CD4-positive, alpha-beta T cell (primary cell): ENCODE measurements at regions of chr2 and their contacts with region 1.

Region 1: GRCh38 chr2:62412347-62412742 is 93.7 kb downstream of the TMEM17 start:
- DNase-seq: peak in 1 of 14 experiments; percentile 31
- ATAC-seq: no peak
- H3K4me3 ChIP-seq: no peak overlapping the region
- H3K4me3 Mint-ChIP-seq: peak overlapping the region; percentile 65
- H3K27ac ChIP-seq: no peak overlapping the region
- H3K27ac Mint-ChIP-seq: peak overlapping the region; percentile 70
- H3K4me1 ChIP-seq: peaks cover 5% of the 10 kb centered on the region
- H3K4me1 Mint-ChIP-seq: peaks cover 5% of the 10 kb centered on the region
- H3K27me3 ChIP-seq: no peaks in the 10 kb centered on the region
- H3K27me3 Mint-ChIP-seq: no peaks in the 10 kb centered on the region
- CTCF ChIP-seq: no peak

Region 2: GRCh38 chr2:61922714-61923113 is 489.6 kb before region 1 on chr2:
- CTCF ChIA-PET with region 1: no interaction called
- POLR2A ChIA-PET with region 1: no interaction called
- intact Hi-C with region 1: loop called (anchors 1 kb)
- DNase-seq: no peak
- ATAC-seq: no peak
- H3K4me3 ChIP-seq: no peak overlapping the region
- H3K4me3 Mint-ChIP-seq: no peak overlapping the region
- H3K27ac ChIP-seq: no peak overlapping the region
- H3K27ac Mint-ChIP-seq: no peak overlapping the region
- H3K4me1 ChIP-seq: no peaks in the 10 kb centered on the region
- H3K4me1 Mint-ChIP-seq: no peaks in the 10 kb centered on the region
- H3K27me3 ChIP-seq: no peaks in the 10 kb centered on the region
- H3K27me3 Mint-ChIP-seq: no peaks in the 10 kb centered on the region
- CTCF ChIP-seq: no peak

Region 3: GRCh38 chr2:61993444-61994024 is 418.8 kb before region 1 on chr2:
- CTCF ChIA-PET with region 1: interaction called, 3 read pairs
- POLR2A ChIA-PET with region 1: no interaction called
- intact Hi-C with region 1: loop called (anchors 1 to 2 kb)
- DNase-seq: peak in 4 of 14 experiments; percentile 10 to 49 (median 46)
- ATAC-seq: no peak
- H3K4me3 ChIP-seq: no peak overlapping the region
- H3K4me3 Mint-ChIP-seq: no peak overlapping the region
- H3K27ac ChIP-seq: no peak overlapping the region
- H3K27ac Mint-ChIP-seq: no peak overlapping the region
- H3K4me1 ChIP-seq: no peaks in the 10 kb centered on the region
- H3K4me1 Mint-ChIP-seq: peaks cover 6% of the 10 kb centered on the region
- H3K27me3 ChIP-seq: no peaks in the 10 kb centered on the region
- H3K27me3 Mint-ChIP-seq: no peaks in the 10 kb centered on the region
- CTCF ChIP-seq: no peak

Region 4: DNA sequence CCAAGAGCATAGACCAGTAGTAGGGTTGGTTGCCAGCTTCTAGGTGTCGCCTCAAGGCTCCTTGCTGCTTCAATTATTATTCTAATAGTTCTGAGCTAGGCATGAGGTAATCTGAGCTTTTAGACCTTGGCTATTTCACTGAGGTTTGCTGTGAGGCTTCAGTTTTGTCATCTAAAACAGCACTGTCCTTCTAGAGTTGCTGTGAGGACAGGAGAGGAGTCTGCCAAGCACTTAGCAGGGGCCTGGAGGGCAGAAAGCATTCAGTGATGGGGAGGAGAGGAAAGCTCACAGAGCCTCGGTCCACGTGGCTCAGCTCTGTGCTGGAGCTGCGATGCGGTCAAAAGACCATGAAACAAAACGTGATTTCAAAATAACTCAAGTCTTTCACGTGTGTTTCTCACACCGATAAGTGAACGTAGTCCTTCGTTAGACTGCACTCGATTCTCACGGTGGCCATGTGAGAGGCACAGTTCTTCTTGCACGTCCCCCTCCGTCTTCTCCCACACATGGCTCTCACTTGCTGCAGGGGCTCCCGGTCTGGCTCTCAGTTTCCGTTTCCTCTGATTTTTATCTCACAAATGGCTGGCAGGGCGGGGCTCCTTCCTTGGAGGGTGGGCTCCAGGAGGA is 102.8 kb before region 1 on chr2:
- CTCF ChIA-PET with region 1: no interaction called
- POLR2A ChIA-PET with region 1: no interaction called
- intact Hi-C with region 1: no loop called
- DNase-seq: peak in 5 of 14 experiments; percentile 31 to 49 (median 33)
- ATAC-seq: no peak
- H3K4me3 ChIP-seq: no peak overlapping the region
- H3K4me3 Mint-ChIP-seq: peak overlapping the region; percentile 71
- H3K27ac ChIP-seq: peak overlapping the region in 1 of 2 donors; percentile 23
- H3K27ac Mint-ChIP-seq: peak overlapping the region; percentile 75
- H3K4me1 ChIP-seq: peaks cover 57% of the 10 kb centered on the region
- H3K4me1 Mint-ChIP-seq: peaks cover 80% of the 10 kb centered on the region
- H3K27me3 ChIP-seq: no peaks in the 10 kb centered on the region
- H3K27me3 Mint-ChIP-seq: no peaks in the 10 kb centered on the region
- CTCF ChIP-seq: no peak

Region 5: GRCh38 chr2:62321380-62322289 is 90.7 kb before region 1 on chr2:
- CTCF ChIA-PET with region 1: no interaction called
- POLR2A ChIA-PET with region 1: no interaction called
- intact Hi-C with region 1: no loop called
- DNase-seq: no peak
- ATAC-seq: no peak
- H3K4me3 ChIP-seq: no peak overlapping the region
- H3K4me3 Mint-ChIP-seq: no peak overlapping the region
- H3K27ac ChIP-seq: no peak overlapping the region
- H3K27ac Mint-ChIP-seq: no peak overlapping the region
- H3K4me1 ChIP-seq: no peaks in the 10 kb centered on the region
- H3K4me1 Mint-ChIP-seq: no peaks in the 10 kb centered on the region
- H3K27me3 ChIP-seq: no peaks in the 10 kb centered on the region
- H3K27me3 Mint-ChIP-seq: no peaks in the 10 kb centered on the region
- CTCF ChIP-seq: no peak

Region 6: GRCh38 chr2:62398356-62398755 is 14.0 kb before region 1 on chr2:
- CTCF ChIA-PET with region 1: no interaction called
- POLR2A ChIA-PET with region 1: no interaction called
- intact Hi-C with region 1: no loop called
- DNase-seq: no peak
- ATAC-seq: no peak
- H3K4me3 ChIP-seq: no peak overlapping the region
- H3K4me3 Mint-ChIP-seq: no peak overlapping the region
- H3K27ac ChIP-seq: no peak overlapping the region
- H3K27ac Mint-ChIP-seq: no peak overlapping the region
- H3K4me1 ChIP-seq: no peaks in the 10 kb centered on the region
- H3K4me1 Mint-ChIP-seq: no peaks in the 10 kb centered on the region
- H3K27me3 ChIP-seq: no peaks in the 10 kb centered on the region
- H3K27me3 Mint-ChIP-seq: no peaks in the 10 kb centered on the region
- CTCF ChIP-seq: no peak